ENCODE measurements at regions of chr19 and their contacts with region 1.

Region 1: DNA sequence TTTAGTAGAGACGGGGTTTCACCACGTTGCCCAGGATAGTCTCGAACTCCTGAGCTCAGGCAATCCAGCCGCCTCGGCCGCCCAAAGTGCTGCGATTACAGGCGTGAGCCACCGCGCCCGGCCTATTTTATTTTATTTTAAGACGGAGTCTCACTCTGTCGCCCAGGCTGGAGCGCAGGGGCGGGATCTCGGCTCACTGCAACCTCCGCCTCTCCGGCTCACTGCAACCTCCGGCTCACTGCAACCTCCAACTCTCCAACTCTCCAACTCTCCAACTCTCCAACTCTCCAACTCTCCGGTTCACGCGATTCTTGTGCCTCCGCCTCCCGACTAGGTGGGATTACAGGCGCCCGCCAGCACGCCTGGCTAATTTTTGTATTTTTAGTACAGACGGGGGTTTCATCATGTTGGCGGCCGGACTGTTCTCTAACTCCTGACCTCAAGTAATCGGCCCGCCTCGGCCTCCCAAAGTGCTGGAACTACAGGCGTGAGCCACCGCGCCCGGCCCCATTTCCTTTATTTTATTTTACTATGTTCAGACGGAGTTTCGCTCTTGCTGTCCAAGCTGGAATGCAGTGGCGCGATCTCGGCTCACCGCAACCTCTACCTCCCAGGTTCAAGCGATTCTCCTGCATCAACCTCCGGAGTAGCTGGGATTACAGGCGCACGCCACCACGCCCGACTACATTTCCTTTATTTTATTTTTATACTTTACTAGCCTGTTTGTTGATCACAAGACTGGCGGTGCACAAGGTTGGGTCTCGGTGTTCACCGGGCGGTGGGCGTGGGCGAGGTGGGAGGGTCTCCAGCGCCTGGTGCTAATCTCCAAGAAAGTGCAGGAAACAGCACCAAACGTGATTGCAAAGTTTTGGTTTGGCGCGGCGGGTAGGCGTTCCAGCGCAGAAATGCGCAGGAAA is 23.7 kb upstream of the ZNF850 start:
- DNase-seq: no peak
- H3K4me3 ChIP-seq: peak overlapping the region; percentile 72 to 98 (median 88)
- H3K27ac ChIP-seq: peak overlapping the region; percentile 75 to 90 (median 88)
- H3K4me1 ChIP-seq: peaks cover 6 to 24% (median 10%) of the 10 kb centered on the region in 6 donors
- H3K27me3 ChIP-seq: no peaks in the 10 kb centered on the region
- CTCF ChIP-seq: no peak
- POLR2A ChIP-seq: no peak

Region 2: GRCh38 chr19:36378625-36379509 is 417.5 kb before region 1 on chr19 and contains the start of gene ZFP14:
- intact Hi-C with region 1: loop called (anchors 5 kb)
- DNase-seq: peak; percentile 98
- H3K4me3 ChIP-seq: peak within 1 kb of the TSS; percentile 67 to 98 (median 82)
- H3K27ac ChIP-seq: peak within 1 kb of the TSS; percentile 82 to 95 (median 90)
- H3K4me1 ChIP-seq: peaks cover 7 to 32% (median 20%) of the 10 kb centered on the region in 6 donors
- H3K27me3 ChIP-seq: no peaks in the 10 kb centered on the region
- CTCF ChIP-seq: peak in 4 of 11 experiments; percentile 11 to 38 (median 22)
- POLR2A ChIP-seq: peak in 1 of 3 donors; percentile 86
- total RNA-seq, gene ZFP14: 5.7 to 14.5 (median 11.3) TPM

Region 3: GRCh38 chr19:36685835-36686234 is 110.5 kb before region 1 on chr19:
- intact Hi-C with region 1: no loop called
- DNase-seq: no peak
- H3K4me3 ChIP-seq: peak overlapping the region in 1 of 8 donors; percentile 93
- H3K27ac ChIP-seq: no peak overlapping the region
- H3K4me1 ChIP-seq: peaks cover 9 to 31% (median 24%) of the 10 kb centered on the region in 6 donors
- H3K27me3 ChIP-seq: no peaks in the 10 kb centered on the region
- CTCF ChIP-seq: no peak
- POLR2A ChIP-seq: no peak

Region 4: GRCh38 chr19:36850559-36851442 is 54.5 kb after region 1 on chr19 and contains the start of gene ZNF345:
- intact Hi-C with region 1: no loop called
- DNase-seq: peak; percentile 94
- H3K4me3 ChIP-seq: peak within 1 kb of the TSS; percentile 57 to 99 (median 90)
- H3K27ac ChIP-seq: peak within 1 kb of the TSS; percentile 84 to 94 (median 88)
- H3K4me1 ChIP-seq: peaks cover 10 to 39% (median 28%) of the 10 kb centered on the region in 6 donors
- H3K27me3 ChIP-seq: no peaks in the 10 kb centered on the region
- CTCF ChIP-seq: no peak
- POLR2A ChIP-seq: peak in 1 of 3 donors; percentile 56
- total RNA-seq, gene ZNF345: 4.8 to 18.2 (median 9.8) TPM

Region 5: GRCh38 chr19:36876993-36877938 is 80.9 kb after region 1 on chr19:
- intact Hi-C with region 1: no loop called
- DNase-seq: no peak
- H3K4me3 ChIP-seq: peak overlapping the region in 1 of 8 donors; percentile 31
- H3K27ac ChIP-seq: no peak overlapping the region
- H3K4me1 ChIP-seq: no peaks in the 10 kb centered on the region
- H3K27me3 ChIP-seq: no peaks in the 10 kb centered on the region
- CTCF ChIP-seq: no peak
- POLR2A ChIP-seq: no peak

Measured in spleen (tissue), 13 donors.